ENCODE measurements at regions of chr1 and their contacts with region 1.

Region 1: GRCh38 chr1:89904219-89904980 is 83.6 kb downstream of the LRRC8D start:
- DNase-seq: no peak
- ATAC-seq: no peak

Region 2: DNA sequence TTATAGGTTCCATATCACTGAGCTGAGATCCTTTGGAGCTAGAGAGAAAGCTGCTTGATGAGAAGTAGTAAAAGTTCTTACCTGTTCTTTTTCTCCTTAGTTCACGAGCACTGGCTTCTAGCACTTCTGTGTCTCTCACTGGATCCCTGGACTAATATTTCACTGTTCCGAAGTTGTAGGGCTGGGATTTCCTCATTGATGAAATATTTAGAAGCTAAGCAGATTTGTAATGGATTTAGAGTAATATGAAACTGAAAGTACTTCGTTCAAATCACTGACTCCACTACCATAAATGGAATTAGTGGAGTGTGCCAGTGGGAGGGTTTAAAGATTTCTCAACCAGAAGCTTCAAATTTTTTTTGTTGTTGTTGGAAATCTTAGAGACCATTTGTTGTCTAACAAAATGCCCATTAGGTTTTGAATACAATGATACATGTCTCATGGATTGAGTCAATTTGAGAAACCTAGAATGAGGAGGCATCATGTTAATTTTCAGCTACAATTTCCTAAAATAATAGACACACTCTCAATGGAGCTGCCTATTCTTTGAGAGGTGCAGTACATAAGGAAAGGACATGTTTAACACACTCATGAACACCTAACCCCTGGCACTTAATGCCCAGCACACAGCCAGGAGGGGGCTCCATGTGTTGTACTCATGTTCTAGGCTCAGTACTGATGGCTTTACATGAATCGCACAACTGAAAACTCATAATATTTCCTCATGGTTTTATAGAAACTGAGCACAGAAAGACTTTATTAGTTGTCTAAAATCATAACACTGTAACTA is 839.1 kb before region 1 on chr1 and contains the start of gene GBP1:
- intact Hi-C with region 1: no loop called
- DNase-seq: no peak
- ATAC-seq: peak; percentile 91
- total RNA-seq, gene GBP1: 8.3 TPM

Region 3: DNA sequence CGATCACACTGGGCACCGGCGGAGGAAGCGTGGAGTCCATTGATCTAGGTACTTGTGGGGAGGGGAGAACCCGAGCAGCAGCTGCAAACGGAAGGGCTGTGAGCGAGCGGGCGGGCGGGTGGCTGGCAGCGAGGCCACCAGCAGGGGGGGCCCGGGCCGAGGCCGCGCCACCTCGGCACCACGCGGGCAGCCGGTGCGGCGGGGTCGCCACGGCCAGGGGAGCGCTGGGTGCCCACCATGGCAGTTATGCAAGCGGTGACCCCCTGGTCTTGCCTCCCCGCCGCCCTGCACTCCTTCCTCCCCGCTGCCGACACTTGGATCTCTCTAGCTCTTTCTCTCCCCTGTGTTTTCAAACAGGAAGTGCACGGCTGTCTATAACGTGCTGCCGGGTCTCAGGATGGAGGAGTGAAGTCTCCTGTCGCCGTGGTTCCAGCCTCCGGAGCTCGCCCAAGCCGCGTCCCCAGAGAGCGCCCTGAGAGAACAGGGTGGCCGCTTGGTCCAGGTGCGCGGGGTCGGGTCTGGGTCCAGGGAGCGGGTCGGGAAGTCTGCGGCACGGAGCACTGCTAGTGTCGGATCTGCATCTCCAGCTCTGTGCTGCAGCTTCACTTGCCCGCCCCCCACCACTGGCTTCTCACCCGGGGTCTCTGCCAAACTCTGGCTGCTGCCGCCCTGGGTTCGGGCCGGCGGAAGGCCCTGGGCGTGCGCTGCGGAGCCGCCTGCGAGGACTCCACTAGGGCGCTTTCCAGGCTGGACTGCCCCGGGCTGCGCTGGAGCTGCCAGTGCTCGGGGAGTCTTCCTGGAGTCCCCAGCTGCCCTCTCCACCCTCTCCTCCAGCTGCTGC is 60.9 kb before region 1 on chr1:
- intact Hi-C with region 1: loop called (anchors 5 kb)
- DNase-seq: peak; percentile 90
- ATAC-seq: peak; percentile 94

Measured in Right ventricle myocardium inferior (tissue), 1 donor.